Caco-2 (cell line): ENCODE measurements at regions of chr9 and their contacts with region 1.

Region 1: DNA sequence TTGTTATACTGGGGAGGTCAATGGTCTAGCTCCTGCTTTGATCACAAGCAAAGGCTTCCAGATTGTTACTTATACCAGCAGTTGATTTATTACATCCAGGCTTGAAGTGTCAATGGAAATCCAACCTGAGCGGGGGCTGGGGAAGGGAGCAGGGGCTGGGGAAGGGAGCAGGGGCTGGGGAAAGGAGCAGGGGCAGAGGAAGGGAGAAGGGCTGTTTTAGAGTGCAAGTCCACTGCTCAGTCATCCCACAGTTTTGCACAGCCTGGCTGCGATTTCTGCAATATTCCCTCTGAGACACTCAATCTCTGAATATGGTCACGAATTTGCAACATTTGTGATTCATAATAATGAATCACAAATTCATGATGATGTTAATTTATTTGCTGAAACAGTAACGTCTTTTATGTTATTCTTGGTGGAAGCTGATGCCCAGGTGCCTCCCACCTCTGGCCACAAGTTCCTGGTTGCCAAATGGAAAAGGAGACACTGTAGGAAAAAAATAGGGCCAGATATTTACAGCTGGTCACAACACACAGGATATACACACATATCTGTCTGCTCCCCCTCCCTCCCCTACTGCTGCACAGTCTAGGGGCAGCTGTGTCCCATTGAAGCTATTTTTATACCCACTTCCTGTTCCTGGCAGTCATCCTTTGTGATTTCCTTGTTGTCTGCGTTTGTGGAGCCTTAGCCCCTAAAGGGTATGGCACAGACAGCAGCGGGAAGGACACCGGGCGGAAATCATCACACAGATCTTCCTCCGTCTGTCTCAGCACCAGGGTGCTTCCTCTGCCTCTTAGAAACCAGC is 325.1 kb downstream of the GADD45G start:
- DNase-seq: no peak
- H3K4me3 ChIP-seq: no peak overlapping the region
- H3K4me3 Mint-ChIP-seq: no peak overlapping the region
- H3K27ac Mint-ChIP-seq: no peak overlapping the region
- H3K4me1 ChIP-seq: peaks cover under 1% of the 10 kb centered on the region
- H3K4me1 Mint-ChIP-seq: peaks cover 18% of the 10 kb centered on the region
- H3K27me3 ChIP-seq: no peaks in the 10 kb centered on the region
- H3K27me3 Mint-ChIP-seq: no peaks in the 10 kb centered on the region
- CTCF ChIP-seq: no peak

Region 2: GRCh38 chr9:89999534-90000370 is 69.9 kb after region 1 on chr9:
- CTCF ChIA-PET with region 1: no interaction called
- POLR2A ChIA-PET with region 1: no interaction called
- intact Hi-C with region 1: loop called (anchors 10 kb)
- DNase-seq: peak; percentile 37 to 52
- H3K4me3 ChIP-seq: no peak overlapping the region
- H3K4me3 Mint-ChIP-seq: peak overlapping the region; percentile 38
- H3K27ac Mint-ChIP-seq: peak overlapping the region; percentile 35
- H3K4me1 ChIP-seq: peaks cover 26% of the 10 kb centered on the region
- H3K4me1 Mint-ChIP-seq: peaks cover 11% of the 10 kb centered on the region
- H3K27me3 ChIP-seq: no peaks in the 10 kb centered on the region
- H3K27me3 Mint-ChIP-seq: no peaks in the 10 kb centered on the region
- CTCF ChIP-seq: no peak